ENCODE measurements at regions of chr4 and their contacts with region 1.

Region 1: GRCh38 chr4:12633053-12633651 is 851.0 kb downstream of the RAB28 start:
- DNase-seq: peak; percentile 78
- H3K4me3 ChIP-seq: no peak overlapping the region
- H3K27ac ChIP-seq: no peak overlapping the region
- H3K4me1 ChIP-seq: no peaks in the 10 kb centered on the region
- H3K27me3 ChIP-seq: no peaks in the 10 kb centered on the region
- CTCF ChIP-seq: peak; percentile 76 to 80
- POLR2A ChIP-seq: no peak

Region 2: GRCh38 chr4:11418610-11419009 is 1214.5 kb before region 1 on chr4:
- CTCF ChIA-PET with region 1: interaction called, 8 read pairs
- POLR2A ChIA-PET with region 1: no interaction called
- dilution Hi-C with region 1: no loop called
- intact Hi-C with region 1: loop called (anchors 2 kb)
- DNase-seq: peak; percentile 21
- H3K4me3 ChIP-seq: no peak overlapping the region
- H3K27ac ChIP-seq: no peak overlapping the region
- H3K4me1 ChIP-seq: no peaks in the 10 kb centered on the region
- H3K27me3 ChIP-seq: no peaks in the 10 kb centered on the region
- CTCF ChIP-seq: peak; percentile 40 to 55
- POLR2A ChIP-seq: no peak

Region 3: GRCh38 chr4:11428899-11429698 is 1204.1 kb before region 1 on chr4:
- CTCF ChIA-PET with region 1: interaction called, 12 read pairs
- POLR2A ChIA-PET with region 1: no interaction called
- dilution Hi-C with region 1: no loop called
- intact Hi-C with region 1: loop called (anchors 1 kb)
- DNase-seq: peak; percentile 75
- H3K4me3 ChIP-seq: peak overlapping the region; percentile 56 to 75 (median 72)
- H3K27ac ChIP-seq: no peak overlapping the region
- H3K4me1 ChIP-seq: peaks cover 23% of the 10 kb centered on the region
- H3K27me3 ChIP-seq: peaks cover 10 to 13% of the 10 kb centered on the region in 2 experiments
- CTCF ChIP-seq: peak; percentile 65 to 89
- POLR2A ChIP-seq: no peak

Region 4: GRCh38 chr4:11748164-11748872 is 884.8 kb before region 1 on chr4:
- CTCF ChIA-PET with region 1: interaction called, 10 read pairs
- POLR2A ChIA-PET with region 1: no interaction called
- dilution Hi-C with region 1: no loop called
- intact Hi-C with region 1: no loop called
- DNase-seq: peak; percentile 96
- H3K4me3 ChIP-seq: peak overlapping the region in 1 of 3 experiments; percentile 48
- H3K27ac ChIP-seq: peak overlapping the region; percentile 85
- H3K4me1 ChIP-seq: peaks cover 48% of the 10 kb centered on the region
- H3K27me3 ChIP-seq: no peaks in the 10 kb centered on the region
- CTCF ChIP-seq: no peak
- POLR2A ChIP-seq: no peak

Region 5: DNA sequence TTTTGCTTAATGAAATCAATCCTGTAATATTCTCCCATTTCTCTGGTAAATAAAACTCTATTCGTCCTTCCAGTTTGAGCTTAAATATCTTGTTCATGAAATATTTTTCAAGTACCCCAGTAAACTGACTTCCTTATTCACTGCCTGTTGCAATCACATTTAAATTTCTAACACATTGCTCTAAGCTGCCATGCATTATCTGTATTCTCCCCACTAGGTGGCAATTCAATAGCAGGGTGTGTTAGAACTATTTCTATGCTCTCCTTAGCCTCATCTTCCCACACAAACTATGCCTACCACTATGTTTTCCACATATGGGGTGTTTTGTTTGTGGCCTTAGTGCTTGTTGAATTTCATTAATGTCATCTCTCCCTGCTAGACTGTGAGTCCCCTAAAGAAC is 827.3 kb before region 1 on chr4:
- CTCF ChIA-PET with region 1: interaction called, 7 read pairs
- POLR2A ChIA-PET with region 1: no interaction called
- dilution Hi-C with region 1: no loop called
- intact Hi-C with region 1: loop called (anchors 1 kb)
- DNase-seq: peak; percentile 81
- H3K4me3 ChIP-seq: no peak overlapping the region
- H3K27ac ChIP-seq: peak overlapping the region; percentile 45
- H3K4me1 ChIP-seq: peaks cover 21% of the 10 kb centered on the region
- H3K27me3 ChIP-seq: no peaks in the 10 kb centered on the region
- CTCF ChIP-seq: peak; percentile 58 to 65
- POLR2A ChIP-seq: no peak

Region 6: DNA sequence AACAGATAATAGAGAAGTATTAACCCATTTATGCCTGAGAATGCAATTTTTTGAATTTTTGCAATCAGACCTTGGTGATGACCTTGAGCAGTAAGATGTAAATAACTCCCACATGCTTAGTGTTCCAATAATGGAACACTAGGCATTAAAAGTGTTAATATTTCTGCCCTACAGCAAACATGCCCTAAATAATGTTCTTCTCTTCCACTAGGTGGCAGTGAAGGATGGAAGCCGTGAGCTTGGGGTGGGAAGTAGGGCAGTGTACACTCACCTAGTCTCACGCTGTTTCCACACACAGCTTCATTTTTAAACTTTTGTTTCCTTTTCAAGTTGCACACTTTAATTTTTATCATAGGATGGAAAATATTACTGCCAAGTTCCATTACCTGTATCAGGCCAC is 591.3 kb before region 1 on chr4:
- CTCF ChIA-PET with region 1: interaction called, 3 read pairs
- POLR2A ChIA-PET with region 1: no interaction called
- dilution Hi-C with region 1: no loop called
- intact Hi-C with region 1: loop called (anchors 1 kb)
- DNase-seq: no peak
- H3K4me3 ChIP-seq: no peak overlapping the region
- H3K27ac ChIP-seq: no peak overlapping the region
- H3K4me1 ChIP-seq: no peaks in the 10 kb centered on the region
- H3K27me3 ChIP-seq: no peaks in the 10 kb centered on the region
- CTCF ChIP-seq: no peak
- POLR2A ChIP-seq: no peak

Measured in endothelial cell of umbilical vein (primary cell).